Lower leg skin (tissue), 4 donors: ENCODE measurements at regions of chrX and their contacts with region 1.

Region 1: DNA sequence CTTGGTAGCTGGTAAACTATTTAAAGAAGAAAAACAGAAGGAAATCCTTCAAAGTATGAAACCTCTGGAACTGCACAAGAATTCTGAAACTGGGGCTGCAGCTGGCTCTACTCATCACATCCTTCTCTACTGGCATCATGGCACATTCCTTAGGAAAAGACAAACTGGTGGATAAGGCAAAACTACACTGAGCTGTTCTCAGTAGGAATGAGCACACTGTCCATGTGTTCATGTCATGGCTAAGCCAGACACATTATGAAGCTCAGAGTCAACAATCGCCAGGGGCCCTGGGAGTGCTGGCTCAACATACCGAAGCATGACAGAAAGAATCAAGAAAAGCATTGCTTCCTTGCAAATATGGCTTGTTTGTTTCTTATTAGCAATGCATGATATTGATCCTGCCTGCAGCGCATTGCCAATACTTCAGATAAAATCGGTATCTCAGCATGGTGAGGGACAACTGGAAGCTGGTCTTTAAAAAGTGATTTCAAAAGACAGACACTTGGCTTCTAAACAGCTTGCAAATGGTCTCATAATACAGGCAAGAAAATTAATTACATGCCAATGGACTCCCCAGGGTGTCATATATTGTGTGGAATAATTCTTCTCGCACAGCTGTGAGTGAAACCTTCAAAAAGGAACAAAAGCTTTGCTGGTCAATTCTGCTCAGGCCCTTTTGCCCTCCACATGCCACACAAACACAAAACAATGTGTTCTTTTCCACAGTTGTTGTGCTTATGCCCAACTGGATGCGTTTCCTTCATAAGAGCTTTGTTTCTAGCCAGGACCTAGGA is 300.2 kb upstream of the VCX start:
- DNase-seq: no peak
- H3K4me3 ChIP-seq: no peak overlapping the region
- CTCF ChIP-seq: no peak
- POLR2A ChIP-seq: no peak

Region 2: DNA sequence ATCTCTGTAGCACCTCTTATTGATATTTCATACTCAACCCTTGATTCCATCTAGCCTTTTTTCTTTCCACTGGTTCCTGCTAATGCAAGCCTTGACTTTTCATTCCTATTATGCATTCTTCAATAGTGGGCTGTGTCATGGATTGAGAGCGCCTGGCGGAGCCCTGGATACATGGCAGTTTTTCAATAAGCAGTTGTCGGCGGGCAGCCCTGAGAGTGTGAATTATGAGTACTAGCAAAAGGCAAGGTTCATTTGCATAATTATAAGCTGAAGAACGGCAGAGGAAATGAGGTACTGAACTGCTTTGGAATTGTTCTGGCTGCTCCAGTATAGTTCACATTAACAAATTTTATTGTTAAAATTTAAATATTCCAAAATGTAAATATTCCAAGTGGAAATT is 39.5 kb before region 1 on chrX:
- intact Hi-C with region 1: loop called (anchors 2 kb)
- DNase-seq: no peak
- H3K4me3 ChIP-seq: no peak overlapping the region
- CTCF ChIP-seq: no peak
- POLR2A ChIP-seq: no peak